Activated naive CD4-positive, alpha-beta T cell treated with anti-CD3 and anti-CD28 coated beads for 36 hours (primary cell): ENCODE measurements at regions of chr3 and their contacts with region 1.

Region 1: GRCh38 chr3:88203642-88204055 is 53.9 kb downstream of the C3orf38 start:
- DNase-seq: peak; percentile 78
- H3K4me3 Mint-ChIP-seq: no peak overlapping the region
- H3K27ac Mint-ChIP-seq: no peak overlapping the region
- H3K4me1 Mint-ChIP-seq: no peaks in the 10 kb centered on the region
- H3K27me3 Mint-ChIP-seq: no peaks in the 10 kb centered on the region

Region 2: DNA sequence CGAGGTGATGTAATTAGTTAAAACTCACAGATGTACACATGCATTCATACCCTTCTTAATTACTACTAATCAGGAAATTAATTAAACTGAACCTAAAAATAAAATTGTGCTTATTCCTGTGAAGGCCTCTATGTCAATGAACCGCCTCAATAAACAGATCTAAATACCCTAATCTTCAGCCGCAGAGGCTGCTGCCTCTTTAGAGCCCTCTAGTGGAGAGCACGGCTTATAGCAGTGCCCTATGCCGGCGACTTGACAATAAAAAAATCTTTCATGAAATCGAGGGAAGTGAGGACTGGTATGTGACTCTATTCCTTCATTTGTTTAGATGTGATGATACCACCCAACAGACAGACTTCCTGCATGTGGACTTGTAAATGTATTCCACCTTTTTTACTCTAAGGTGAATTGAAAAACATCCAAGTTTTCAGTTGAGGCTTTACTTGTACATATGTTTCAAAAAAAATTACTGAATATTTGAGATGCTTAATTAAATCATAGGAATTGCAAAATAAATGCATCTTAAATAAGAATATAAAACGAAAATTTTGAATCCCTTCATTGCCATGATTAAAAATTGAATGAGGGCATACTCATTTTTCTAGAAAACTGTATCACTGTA is 895.4 kb after region 1 on chr3:
- CTCF ChIA-PET with region 1: interaction called, 3 read pairs
- intact Hi-C with region 1: loop called (anchors 1 kb)
- DNase-seq: peak; percentile 55
- H3K4me3 Mint-ChIP-seq: no peak overlapping the region
- H3K27ac Mint-ChIP-seq: no peak overlapping the region
- H3K4me1 Mint-ChIP-seq: no peaks in the 10 kb centered on the region
- H3K27me3 Mint-ChIP-seq: peaks cover 2% of the 10 kb centered on the region

Region 3: DNA sequence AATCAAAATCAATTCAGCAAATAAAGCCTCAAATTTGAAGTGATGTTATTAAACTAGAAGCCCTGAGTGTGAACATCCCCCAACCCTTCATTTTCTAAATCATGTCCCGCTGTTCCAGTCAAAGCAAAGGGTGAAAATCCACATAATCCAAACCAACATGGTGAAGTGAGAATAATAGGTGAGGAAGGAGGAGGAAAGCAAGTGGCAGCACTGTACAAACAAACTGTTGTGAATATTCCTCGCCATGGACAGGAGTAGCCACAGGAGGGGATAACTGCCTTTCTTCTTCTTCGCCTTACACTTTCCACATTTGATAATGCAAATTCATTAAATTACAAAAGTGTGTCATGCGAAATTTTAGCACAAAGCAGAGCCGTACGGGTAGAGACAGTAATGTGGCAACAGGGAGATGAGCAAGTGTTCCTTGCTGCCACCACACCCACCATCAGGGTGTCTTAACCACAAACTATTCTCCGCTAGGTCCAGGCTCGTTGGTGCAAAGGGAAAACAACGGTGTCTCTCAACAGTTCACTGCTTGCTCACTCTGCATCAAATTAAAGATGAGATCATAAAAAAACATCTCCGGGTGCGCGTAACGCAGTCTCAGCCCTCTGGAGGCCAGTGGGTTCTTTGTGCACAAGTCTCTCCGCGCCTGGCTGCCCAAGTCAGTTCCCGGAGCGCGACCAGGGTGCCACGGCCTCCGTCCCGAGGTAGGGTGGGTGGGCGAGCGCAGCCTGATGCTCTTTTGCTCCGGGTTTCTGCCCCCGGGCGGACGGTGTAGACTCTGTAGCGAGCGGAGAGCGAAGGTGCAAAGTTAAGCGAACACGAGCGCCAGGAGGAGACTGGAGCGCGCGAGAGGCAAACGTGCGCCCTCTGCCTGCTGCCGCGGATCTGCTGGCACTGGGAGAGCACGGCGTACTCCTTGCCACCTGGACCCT is 910.5 kb after region 1 on chr3:
- CTCF ChIA-PET with region 1: no interaction called
- intact Hi-C with region 1: loop called (anchors 1 kb)
- DNase-seq: peak; percentile 62
- H3K4me3 Mint-ChIP-seq: peak overlapping the region; percentile 59
- H3K27ac Mint-ChIP-seq: no peak overlapping the region
- H3K4me1 Mint-ChIP-seq: peaks cover 2% of the 10 kb centered on the region
- H3K27me3 Mint-ChIP-seq: peaks cover 27% of the 10 kb centered on the region

Region 4: GRCh38 chr3:90091204-90091924 is 1887.7 kb after region 1 on chr3:
- CTCF ChIA-PET with region 1: no interaction called
- intact Hi-C with region 1: loop called (anchors 2 kb)
- DNase-seq: no peak
- H3K4me3 Mint-ChIP-seq: no peak overlapping the region
- H3K27ac Mint-ChIP-seq: no peak overlapping the region
- H3K4me1 Mint-ChIP-seq: no peaks in the 10 kb centered on the region
- H3K27me3 Mint-ChIP-seq: no peaks in the 10 kb centered on the region

Region 5: GRCh38 chr3:90184861-90185260 is 1981.2 kb after region 1 on chr3:
- CTCF ChIA-PET with region 1: no interaction called
- intact Hi-C with region 1: loop called (anchors 2 kb)
- DNase-seq: no peak
- H3K4me3 Mint-ChIP-seq: no peak overlapping the region
- H3K27ac Mint-ChIP-seq: no peak overlapping the region
- H3K4me1 Mint-ChIP-seq: no peaks in the 10 kb centered on the region
- H3K27me3 Mint-ChIP-seq: no peaks in the 10 kb centered on the region